Ascending aorta (tissue), 2 donors: ENCODE measurements at regions of chr3 and their contacts with region 1.

Region 1: DNA sequence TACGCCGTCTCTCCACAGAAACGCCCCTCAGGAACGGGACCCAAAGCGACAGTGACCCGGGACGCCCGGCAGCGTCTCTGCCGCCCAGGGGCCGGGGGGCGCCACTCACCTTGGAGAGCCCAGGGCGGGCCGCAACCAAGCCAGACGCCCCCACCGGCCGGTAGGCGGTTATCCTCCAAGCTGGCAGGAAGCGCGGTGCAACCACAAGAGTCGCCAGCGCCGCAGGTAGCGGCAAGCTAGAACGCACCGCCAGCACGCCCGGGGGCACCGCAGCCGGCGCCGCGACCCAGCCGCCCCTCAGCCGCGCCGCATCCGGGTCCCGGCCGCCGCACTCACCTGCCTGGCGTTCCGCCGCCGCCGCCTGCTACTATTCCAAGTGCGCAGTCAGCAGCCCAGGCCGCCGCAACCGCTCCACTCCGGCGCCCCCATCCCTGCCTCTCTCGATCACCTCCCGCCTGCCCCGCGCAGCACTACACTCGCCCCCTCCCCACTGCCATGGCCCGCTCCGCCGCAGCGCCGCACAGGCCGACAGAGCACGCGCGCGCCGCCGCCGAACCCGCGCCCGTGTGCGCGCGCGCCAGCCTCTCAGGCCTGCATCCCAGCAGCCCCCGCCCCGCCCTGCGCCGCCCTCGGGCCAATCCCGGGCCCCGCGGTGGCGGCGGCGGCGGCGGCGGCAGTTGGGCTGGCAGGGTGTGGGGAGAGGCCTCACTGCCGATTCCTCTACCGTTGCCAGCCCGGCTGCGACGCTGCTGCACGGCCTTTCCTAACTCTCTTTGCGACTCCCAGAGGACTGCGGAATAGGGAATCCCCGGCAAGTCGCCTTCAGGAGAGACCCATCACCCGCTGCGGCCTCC is at the start of gene PIK3CB:
- DNase-seq: peak; percentile 31 to 93
- H3K4me3 ChIP-seq: peak within 1 kb of the TSS; percentile 70 to 98
- H3K27ac ChIP-seq: peak within 1 kb of the TSS; percentile 89 to 90
- H3K4me1 ChIP-seq: peaks cover 0 to 13% of the 10 kb centered on the region in 2 donors
- H3K27me3 ChIP-seq: no peaks in the 10 kb centered on the region
- CTCF ChIP-seq: peak; percentile 26 to 39 (median 28)
- total RNA-seq, gene PIK3CB: 9.3 TPM

Region 2: GRCh38 chr3:138608322-138609135 is 226.1 kb before region 1 on chr3 and contains the start of gene FAIM:
- intact Hi-C with region 1: loop called (anchors 1 kb)
- DNase-seq: peak in 1 of 2 donors; percentile 76
- H3K4me3 ChIP-seq: peak within 1 kb of the TSS; percentile 81 to 93
- H3K27ac ChIP-seq: peak within 1 kb of the TSS; percentile 97
- H3K4me1 ChIP-seq: peaks cover 3 to 8% of the 10 kb centered on the region in 2 donors
- H3K27me3 ChIP-seq: no peaks in the 10 kb centered on the region
- CTCF ChIP-seq: no peak
- total RNA-seq, gene FAIM: 13.5 TPM

Region 3: DNA sequence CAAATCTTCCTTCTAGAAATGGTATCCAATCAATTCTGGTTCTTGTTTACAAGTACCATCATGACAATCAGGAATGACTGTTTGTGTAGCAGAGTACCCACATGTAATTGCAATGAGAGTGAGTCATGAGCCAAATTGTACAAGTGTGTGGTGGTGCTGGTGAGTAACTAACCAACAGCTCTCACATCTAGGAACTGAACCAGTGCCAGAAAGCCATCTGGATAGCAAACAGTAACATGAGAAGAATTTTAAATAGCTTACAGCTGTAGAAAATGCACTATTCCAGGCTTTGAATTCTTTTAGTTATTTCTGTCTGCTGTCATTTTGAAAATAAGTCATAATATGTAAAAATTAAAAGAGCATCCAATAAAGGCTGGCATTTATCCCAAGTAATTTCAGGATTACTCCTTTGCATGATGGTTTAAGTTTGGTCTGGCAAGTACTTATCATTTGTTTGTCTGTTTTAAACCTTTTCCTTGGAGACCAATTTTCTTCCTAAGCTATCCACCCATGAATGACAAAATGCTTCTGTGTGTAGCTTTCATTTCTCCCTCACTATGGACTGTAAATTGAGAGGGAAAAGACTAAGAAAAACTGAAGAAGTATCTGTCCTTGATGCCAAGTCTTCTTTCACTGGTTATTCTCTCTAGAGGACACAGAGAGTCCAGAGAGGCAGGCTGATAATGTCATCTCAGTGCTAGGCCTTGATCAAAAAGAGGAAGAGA is 59.9 kb before region 1 on chr3:
- intact Hi-C with region 1: loop called (anchors 2 kb)
- DNase-seq: peak; percentile 16 to 81
- H3K4me3 ChIP-seq: no peak overlapping the region
- H3K27ac ChIP-seq: peak overlapping the region; percentile 41 to 58
- H3K4me1 ChIP-seq: peaks cover 3 to 7% of the 10 kb centered on the region in 2 donors
- H3K27me3 ChIP-seq: no peaks in the 10 kb centered on the region
- CTCF ChIP-seq: no peak